ENCODE measurements at regions of chr9 and their contacts with region 1.

Region 1: DNA sequence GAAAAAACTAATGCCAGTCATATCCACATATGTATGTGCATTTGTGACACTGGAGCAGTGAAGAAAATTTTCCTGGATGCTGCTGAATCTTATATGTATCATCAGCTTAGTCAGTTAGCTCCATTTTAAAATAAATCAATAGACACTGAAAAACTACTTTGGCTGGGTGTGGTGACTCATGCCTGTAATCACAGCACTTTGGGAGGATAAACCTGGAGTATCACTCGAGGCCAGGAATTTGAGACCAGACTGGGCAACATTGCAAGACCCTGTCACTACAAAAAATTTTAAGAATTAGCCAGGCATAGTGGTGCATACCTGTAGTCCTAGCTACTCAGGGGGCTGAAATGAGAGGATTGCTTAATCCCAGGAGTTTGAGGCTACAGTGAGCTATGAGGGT is 511.0 kb upstream of the TLE4 start:
- DNase-seq: no peak
- H3K4me3 ChIP-seq: no peak overlapping the region
- H3K27ac ChIP-seq: no peak overlapping the region
- H3K4me1 ChIP-seq: no peaks in the 10 kb centered on the region
- H3K27me3 ChIP-seq: peaks cover 14% of the 10 kb centered on the region; the same call in 1 of the 2 replicates
- CTCF ChIP-seq: no peak

Region 2: GRCh38 chr9:78954286-78954685 is 106.5 kb before region 1 on chr9:
- CTCF ChIA-PET with region 1: no interaction called
- POLR2A ChIA-PET with region 1: interaction called, 11 read pairs
- intact Hi-C with region 1: no loop called
- DNase-seq: no peak
- H3K4me3 ChIP-seq: no peak overlapping the region
- H3K27ac ChIP-seq: no peak overlapping the region
- H3K4me1 ChIP-seq: no peaks in the 10 kb centered on the region
- H3K27me3 ChIP-seq: no peaks in the 10 kb centered on the region
- CTCF ChIP-seq: no peak